ENCODE measurements at regions of chr19 and their contacts with region 1.

Region 1: GRCh38 chr19:2096480-2097329 is at the start of gene IZUMO4:
- DNase-seq: peak; percentile 100
- H3K4me3 Mint-ChIP-seq: peak within 1 kb of the TSS; percentile 94
- H3K27ac Mint-ChIP-seq: peak within 1 kb of the TSS; percentile 87
- H3K4me1 Mint-ChIP-seq: peaks cover 29% of the 10 kb centered on the region
- H3K27me3 Mint-ChIP-seq: no peaks in the 10 kb centered on the region
- total RNA-seq, gene IZUMO4: 14.2 to 16.4 TPM

Region 2: DNA sequence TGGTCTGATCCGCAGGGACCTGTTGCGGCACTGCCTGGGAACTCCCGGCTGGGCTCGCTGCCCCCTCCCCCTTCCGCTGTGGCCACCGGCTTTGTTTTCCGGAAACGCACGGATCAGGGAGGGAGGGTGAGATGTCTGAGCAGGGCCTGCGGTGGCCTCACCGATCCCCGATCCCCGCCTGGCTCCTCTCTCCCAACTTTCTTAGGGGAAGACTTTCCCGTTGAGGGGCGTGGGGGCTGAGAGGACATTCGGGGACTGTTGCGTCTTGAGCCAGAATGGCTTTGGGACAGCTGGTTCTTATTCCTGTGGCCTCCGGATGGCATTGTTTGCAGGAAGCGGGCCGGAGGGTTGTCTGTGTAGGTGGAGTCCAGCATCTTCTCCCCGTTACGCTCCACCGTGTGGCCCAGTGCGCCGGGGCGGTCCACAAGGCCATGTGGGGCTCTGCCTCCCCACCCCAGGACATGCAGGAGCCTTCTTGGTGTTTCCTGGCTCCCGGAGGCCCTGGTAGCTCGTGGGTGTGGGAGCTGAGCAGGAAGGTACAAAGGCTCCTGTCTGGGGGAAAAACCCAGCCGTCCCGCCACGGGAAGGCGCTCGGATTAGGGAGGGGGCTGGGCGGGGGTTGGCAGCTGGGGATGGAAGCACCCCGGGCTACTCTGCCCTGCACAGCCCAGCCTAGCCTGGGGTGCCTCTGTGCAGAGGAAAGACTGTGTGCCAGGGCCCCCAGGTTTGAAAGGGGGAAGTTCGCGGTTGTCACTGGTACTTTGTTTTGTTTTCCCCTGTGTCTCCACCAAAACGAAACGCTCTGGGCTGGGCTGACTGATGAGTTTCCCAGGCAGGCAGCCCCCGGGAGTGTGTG is 154.4 kb before region 1 on chr19:
- CTCF ChIA-PET with region 1: interaction called, 3 read pairs
- POLR2A ChIA-PET with region 1: no interaction called
- intact Hi-C with region 1: loop called (anchors 2 kb)
- DNase-seq: peak; percentile 89
- H3K4me3 Mint-ChIP-seq: peak overlapping the region; percentile 84
- H3K27ac Mint-ChIP-seq: peak overlapping the region; percentile 94
- H3K4me1 Mint-ChIP-seq: peaks cover 30% of the 10 kb centered on the region
- H3K27me3 Mint-ChIP-seq: no peaks in the 10 kb centered on the region

Region 3: DNA sequence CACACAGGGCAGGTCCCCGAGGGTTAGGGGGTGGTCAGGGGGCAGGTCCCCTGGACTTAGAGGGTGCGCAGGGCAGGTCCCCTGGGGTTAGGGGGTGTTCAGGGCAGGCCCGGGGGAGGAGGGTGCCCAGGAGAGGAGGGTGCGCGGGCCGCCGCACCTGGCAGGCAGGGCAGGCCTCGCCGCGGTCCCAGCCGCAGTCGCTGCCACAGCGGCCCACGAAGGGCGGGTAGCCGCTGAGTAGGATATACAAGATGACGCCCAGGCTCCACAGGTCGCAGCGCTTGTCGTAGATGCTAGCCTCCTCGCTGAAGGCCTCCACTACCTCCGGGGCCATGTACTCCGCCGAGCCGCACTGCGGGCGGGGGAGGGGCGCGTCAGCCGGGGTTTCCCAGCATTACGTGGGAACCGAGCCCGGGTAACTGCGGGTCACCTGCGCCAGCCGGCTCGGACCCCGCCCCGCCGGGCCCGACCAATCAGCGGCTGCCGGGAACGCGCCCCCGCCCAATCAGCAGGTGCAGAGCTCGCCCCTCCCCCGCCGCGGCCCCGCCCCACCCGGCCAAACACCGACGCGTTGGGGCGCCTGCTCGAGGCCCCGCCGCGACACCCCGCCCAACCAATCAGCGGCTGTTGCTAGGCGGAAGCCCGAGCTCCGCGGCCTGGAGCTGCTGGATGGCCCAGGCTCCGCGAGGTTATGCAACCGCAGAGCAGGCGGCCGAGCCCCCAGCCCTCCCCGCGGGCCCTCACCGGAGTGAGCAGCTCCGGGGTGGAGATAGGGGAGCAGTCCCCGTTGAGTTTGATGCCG is 54.8 kb before region 1 on chr19:
- CTCF ChIA-PET with region 1: no interaction called
- POLR2A ChIA-PET with region 1: no interaction called
- intact Hi-C with region 1: loop called (anchors 2 kb)
- DNase-seq: peak; percentile 100
- H3K4me3 Mint-ChIP-seq: peak overlapping the region; percentile 77
- H3K27ac Mint-ChIP-seq: peak overlapping the region; percentile 89
- H3K4me1 Mint-ChIP-seq: peaks cover 25% of the 10 kb centered on the region
- H3K27me3 Mint-ChIP-seq: no peaks in the 10 kb centered on the region

Region 4: GRCh38 chr19:2061495-2062381 is 35.0 kb before region 1 on chr19:
- CTCF ChIA-PET with region 1: interaction called, 3 read pairs
- POLR2A ChIA-PET with region 1: no interaction called
- intact Hi-C with region 1: loop called (anchors 2 kb)
- DNase-seq: peak; percentile 99
- H3K4me3 Mint-ChIP-seq: peak overlapping the region; percentile 86
- H3K27ac Mint-ChIP-seq: peak overlapping the region; percentile 91
- H3K4me1 Mint-ChIP-seq: peaks cover 27% of the 10 kb centered on the region
- H3K27me3 Mint-ChIP-seq: no peaks in the 10 kb centered on the region

Region 5: DNA sequence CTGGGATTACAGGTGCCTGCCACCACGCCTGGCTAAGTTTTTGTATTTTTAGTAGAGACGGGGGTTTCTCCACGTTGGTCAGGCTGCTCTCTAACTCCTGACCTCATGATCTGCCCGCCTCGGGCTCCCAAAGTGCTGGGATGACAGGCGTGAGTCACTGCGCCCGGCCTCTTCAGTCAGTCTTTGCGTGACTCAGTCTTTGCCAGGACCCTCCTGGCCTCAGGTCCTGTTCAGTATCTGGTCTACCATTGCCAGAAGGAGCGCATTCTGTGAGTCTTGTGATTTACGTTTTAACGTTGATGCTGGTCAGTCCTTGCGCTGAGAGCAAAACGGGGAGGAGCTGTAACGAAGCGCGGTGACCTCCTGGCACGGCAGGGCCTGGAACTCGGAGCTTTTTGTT is 1468.4 kb after region 1 on chr19:
- CTCF ChIA-PET with region 1: no interaction called
- POLR2A ChIA-PET with region 1: no interaction called
- intact Hi-C with region 1: no loop called
- DNase-seq: no peak
- H3K4me3 Mint-ChIP-seq: no peak overlapping the region
- H3K27ac Mint-ChIP-seq: no peak overlapping the region
- H3K4me1 Mint-ChIP-seq: no peaks in the 10 kb centered on the region
- H3K27me3 Mint-ChIP-seq: no peaks in the 10 kb centered on the region